Heart left ventricle (tissue), 16 donors: ENCODE measurements at regions of chr11 and their contacts with region 1.

Region 1: GRCh38 chr11:85699957-85700741 is 14.2 kb upstream of the CCDC89 start:
- DNase-seq: no peak
- ATAC-seq: no peak
- H3K4me3 ChIP-seq: no peak overlapping the region
- H3K27ac ChIP-seq: peak overlapping the region in 1 of 12 donors; percentile 48
- H3K4me1 ChIP-seq: peaks cover 0 to 17% (median 0%) of the 10 kb centered on the region in 12 donors
- H3K27me3 ChIP-seq: no peaks in the 10 kb centered on the region
- CTCF ChIP-seq: no peak
- POLR2A ChIP-seq: no peak

Region 2: DNA sequence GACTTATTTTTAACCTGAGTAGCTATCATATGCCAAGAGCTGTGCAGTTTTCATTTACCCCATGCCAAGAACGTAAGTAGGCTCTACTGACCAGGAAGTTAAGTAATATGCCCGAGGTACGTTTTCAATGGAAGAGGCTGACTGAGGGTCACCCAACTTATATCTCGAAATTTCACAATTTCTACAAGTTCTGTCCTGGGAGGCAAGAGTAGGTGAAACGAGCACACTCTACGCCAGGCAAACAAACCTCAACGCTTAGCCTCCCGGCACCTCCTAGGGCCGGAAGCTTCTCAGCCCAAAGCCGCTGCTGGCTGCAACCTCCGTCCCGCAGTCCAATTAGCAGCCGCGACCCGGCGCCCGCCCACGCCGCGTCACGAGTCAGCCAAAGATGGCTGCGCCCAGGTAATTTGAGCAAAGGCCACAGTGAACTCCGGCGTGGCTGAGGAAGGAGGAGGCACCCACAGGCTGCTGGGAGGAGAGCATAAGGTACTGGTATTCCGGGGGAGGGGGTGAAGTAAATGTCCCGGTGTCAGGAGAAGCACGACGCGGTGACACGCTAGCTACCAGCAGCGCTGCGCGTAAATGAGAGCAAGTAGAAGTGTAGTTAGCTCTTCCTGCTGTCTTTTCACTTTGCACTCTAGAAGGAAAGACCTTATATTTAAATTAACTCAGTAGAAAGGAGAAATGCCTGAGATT is 52.4 kb before region 1 on chr11 and contains the start of gene TMEM126A:
- intact Hi-C with region 1: no loop called
- DNase-seq: peak; percentile 89 to 94 (median 92)
- ATAC-seq: peak; percentile 97 to 99 (median 98)
- H3K4me3 ChIP-seq: peak within 1 kb of the TSS; percentile 54 to 90 (median 71)
- H3K27ac ChIP-seq: peak within 1 kb of the TSS in 11 of 12 donors; percentile 69 to 89 (median 85)
- H3K4me1 ChIP-seq: peaks cover 0 to 26% (median 18%) of the 10 kb centered on the region in 12 donors
- H3K27me3 ChIP-seq: no peaks in the 10 kb centered on the region
- CTCF ChIP-seq: no peak
- POLR2A ChIP-seq: peak; percentile 14 to 67
- total RNA-seq, gene TMEM126A: 36.3 to 77.9 (median 63.6) TPM

Region 3: DNA sequence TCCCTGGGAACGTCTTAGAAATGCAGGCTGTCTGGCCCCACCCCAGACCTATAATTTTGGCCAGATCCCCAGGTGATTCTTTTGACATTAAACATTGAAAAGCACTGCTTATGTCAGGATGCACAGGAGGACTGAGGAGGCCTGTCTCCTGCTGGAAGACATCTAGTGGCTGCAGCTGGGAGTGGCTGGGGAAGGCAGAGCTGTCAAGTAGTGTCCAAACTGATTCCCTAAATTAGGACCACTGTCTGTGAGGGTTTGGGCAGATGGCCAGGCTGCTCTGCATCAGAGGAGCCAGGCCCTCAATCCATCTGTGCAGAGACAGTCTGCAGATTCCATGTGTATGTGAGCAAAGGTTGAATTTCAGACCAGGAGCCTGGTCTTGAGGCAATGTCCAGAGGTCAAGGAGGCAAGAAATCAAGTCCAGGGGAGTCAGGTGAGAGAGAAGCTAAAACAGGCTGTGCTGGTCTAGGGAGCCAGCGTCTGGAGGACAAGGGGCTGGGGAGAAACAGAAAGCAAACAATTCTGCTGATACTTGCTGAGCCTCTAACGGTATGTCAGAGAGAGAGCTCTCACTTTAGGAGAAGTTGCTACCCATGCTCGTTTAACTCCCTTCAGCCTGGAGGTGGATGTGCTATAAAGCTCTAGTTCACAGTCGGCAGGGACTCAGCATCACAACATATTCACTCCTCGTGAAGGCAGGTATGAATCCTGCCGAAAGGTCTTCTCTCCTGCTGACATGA is 126.1 kb after region 1 on chr11:
- intact Hi-C with region 1: loop called in 4 of 10 experiments (anchors 2 to 10 kb)
- DNase-seq: peak in 4 of 5 donors; percentile 27 to 38 (median 32)
- ATAC-seq: peak in 3 of 4 donors; percentile 68 to 76 (median 74)
- H3K4me3 ChIP-seq: no peak overlapping the region
- H3K27ac ChIP-seq: no peak overlapping the region
- H3K4me1 ChIP-seq: peaks cover 0 to 14% (median 0%) of the 10 kb centered on the region in 12 donors
- H3K27me3 ChIP-seq: no peaks in the 10 kb centered on the region
- CTCF ChIP-seq: peak; percentile 27 to 60 (median 52)
- POLR2A ChIP-seq: no peak

Region 4: DNA sequence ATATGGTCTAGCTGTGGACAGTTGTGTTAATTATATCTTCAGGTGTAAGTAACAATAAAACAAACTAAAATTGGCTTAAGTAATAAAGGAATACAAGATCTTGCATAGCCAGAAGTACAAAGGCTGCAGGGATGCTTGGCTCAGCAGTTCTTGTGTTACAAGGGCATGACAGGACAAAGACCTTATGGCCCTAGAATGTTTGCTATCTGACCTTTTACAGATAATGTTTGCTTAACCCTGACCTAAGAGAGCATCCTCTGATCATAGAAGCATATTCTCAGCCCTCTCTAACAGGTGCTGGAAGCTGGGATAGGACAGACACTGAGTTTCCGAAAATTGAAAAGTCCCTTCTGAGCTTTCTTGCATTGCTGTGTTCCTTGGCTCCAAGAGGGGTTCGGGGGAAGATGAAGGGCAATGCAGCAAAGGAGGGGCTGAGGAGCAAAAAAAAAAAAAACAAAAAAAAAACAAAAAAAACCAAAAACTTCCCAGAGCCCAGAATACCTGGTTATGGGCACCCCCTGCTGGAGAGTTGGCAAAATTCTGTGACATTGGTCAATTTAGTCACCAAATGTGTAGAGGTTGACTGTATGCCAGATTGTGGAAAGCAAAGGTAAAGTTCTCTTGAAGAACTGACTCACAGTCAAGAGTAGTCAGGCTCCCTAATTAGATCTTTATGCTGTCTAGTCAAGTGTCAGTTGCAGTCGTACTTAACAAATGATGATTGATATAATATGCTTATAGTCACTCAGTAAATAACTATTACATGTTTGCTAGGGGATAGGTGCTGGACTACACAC is 591.5 kb after region 1 on chr11:
- intact Hi-C with region 1: loop called in 1 of 10 experiments (anchors 10 kb)
- DNase-seq: peak in 2 of 5 donors; percentile 12 to 33
- ATAC-seq: peak in 1 of 4 donors; percentile 34
- H3K4me3 ChIP-seq: no peak overlapping the region
- H3K27ac ChIP-seq: no peak overlapping the region
- H3K4me1 ChIP-seq: peaks cover 0 to 9% (median 0%) of the 10 kb centered on the region in 12 donors
- H3K27me3 ChIP-seq: no peaks in the 10 kb centered on the region
- CTCF ChIP-seq: peak; percentile 36 to 68 (median 54)
- POLR2A ChIP-seq: no peak